ENCODE measurements at regions of chr20 and their contacts with region 1.

Region 1: GRCh38 chr20:53788253-53789022 is 194.8 kb upstream of the ZNF217 start:
- DNase-seq: no peak
- H3K4me3 ChIP-seq: no peak overlapping the region
- H3K27ac ChIP-seq: no peak overlapping the region
- H3K4me1 ChIP-seq: peaks cover 8% of the 10 kb centered on the region
- H3K27me3 ChIP-seq: no peaks in the 10 kb centered on the region
- CTCF ChIP-seq: no peak
- POLR2A ChIP-seq: no peak

Region 2: DNA sequence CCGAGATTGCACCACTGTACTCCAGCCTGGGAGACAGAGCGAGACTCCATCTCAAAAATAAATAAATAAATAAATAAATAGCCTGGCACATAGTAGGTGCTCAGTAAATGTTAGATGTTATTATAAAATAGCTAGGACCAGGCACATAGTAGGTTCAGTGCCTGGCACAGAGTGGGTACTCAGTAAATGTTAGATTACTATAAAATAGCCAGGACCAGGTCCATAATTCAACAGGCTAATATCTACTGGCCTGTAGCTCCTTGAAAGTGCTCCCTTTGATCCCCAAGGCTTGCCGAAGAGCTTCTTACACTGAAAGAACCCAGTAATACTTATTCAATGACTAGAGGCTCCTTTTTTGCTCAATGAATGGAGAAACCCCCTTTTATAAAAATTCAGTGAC is 20.3 kb after region 1 on chr20:
- intact Hi-C with region 1: loop called (anchors 1 kb)
- DNase-seq: no peak
- H3K4me3 ChIP-seq: no peak overlapping the region
- H3K27ac ChIP-seq: no peak overlapping the region
- H3K4me1 ChIP-seq: peaks cover 4% of the 10 kb centered on the region
- H3K27me3 ChIP-seq: no peaks in the 10 kb centered on the region
- CTCF ChIP-seq: no peak
- POLR2A ChIP-seq: no peak

Region 3: DNA sequence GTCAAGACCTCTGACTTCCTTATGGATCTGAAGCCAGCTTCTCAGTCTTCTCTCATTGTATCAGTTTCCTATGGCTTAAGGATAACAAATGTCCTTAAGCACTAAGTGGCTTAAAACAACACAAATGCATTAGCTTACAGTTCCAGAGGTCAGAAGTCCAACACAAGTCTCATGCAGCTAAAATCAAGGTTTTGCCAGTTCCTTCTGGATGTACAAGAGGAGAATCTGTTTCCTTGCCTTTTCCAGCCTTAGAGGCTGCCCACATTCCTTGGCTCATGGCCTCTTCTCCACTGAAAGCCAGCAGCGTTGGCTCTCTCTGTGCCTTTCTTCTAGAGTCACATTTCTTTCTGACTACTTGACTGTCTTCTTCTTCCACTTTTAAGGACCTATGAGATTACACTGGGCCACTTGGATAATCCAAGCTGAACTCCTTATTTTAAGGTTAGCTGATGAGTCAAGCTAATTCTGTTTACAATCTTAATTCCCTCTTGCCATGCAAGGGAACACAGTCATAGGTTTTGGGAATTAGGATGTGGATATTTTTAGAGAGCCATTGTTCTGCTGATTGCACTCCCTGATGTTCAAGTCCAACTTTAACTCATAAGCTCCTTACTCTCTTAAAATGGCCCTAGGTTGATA is 103.0 kb after region 1 on chr20:
- intact Hi-C with region 1: no loop called
- DNase-seq: no peak
- H3K4me3 ChIP-seq: no peak overlapping the region
- H3K27ac ChIP-seq: no peak overlapping the region
- H3K4me1 ChIP-seq: peaks cover 4% of the 10 kb centered on the region
- H3K27me3 ChIP-seq: no peaks in the 10 kb centered on the region
- CTCF ChIP-seq: no peak
- POLR2A ChIP-seq: no peak

Region 4: GRCh38 chr20:55632592-55632991 is 1844.2 kb after region 1 on chr20:
- intact Hi-C with region 1: no loop called
- DNase-seq: no peak
- H3K4me3 ChIP-seq: no peak overlapping the region
- H3K27ac ChIP-seq: no peak overlapping the region
- H3K4me1 ChIP-seq: no peaks in the 10 kb centered on the region
- H3K27me3 ChIP-seq: no peaks in the 10 kb centered on the region
- CTCF ChIP-seq: no peak
- POLR2A ChIP-seq: no peak